ENCODE measurements at regions of chr10 and their contacts with region 1.

Region 1: DNA sequence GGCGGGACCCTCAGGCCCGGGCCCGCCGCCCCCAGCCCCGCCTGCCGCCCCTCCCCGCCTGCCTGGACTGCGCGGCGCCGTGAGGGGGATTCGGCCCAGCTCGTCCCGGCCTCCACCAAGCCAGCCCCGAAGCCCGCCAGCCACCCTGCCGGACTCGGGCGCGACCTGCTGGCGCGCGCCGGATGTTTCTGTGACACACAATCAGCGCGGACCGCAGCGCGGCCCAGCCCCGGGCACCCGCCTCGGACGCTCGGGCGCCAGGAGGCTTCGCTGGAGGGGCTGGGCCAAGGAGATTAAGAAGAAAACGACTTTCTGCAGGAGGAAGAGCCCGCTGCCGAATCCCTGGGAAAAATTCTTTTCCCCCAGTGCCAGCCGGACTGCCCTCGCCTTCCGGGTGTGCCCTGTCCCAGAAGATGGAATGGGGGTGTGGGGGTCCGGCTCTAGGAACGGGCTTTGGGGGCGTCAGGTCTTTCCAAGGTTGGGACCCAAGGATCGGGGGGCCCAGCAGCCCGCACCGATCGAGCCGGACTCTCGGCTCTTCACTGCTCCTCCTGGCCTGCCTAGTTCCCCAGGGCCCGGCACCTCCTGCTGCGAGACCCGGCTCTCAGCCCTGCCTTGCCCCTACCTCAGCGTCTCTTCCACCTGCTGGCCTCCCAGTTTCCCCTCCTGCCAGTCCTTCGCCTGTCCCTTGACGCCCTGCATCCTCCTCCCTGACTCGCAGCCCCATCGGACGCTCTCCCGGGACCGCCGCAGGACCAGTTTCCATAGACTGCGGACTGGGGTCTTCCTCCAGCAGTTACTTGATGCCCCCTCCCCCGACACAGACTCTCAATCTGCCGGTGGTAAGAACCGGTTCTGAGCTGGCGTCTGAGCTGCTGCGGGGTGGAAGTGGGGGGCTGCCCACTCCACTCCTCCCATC is 82.7 kb downstream of the PAX2 start:
- DNase-seq: peak; percentile 56
- ATAC-seq: peak; percentile 62
- H3K4me3 Mint-ChIP-seq: peak overlapping the region; percentile 70
- H3K27ac Mint-ChIP-seq: no peak overlapping the region
- H3K4me1 Mint-ChIP-seq: peaks cover 19% of the 10 kb centered on the region
- H3K27me3 Mint-ChIP-seq: peaks cover 76% of the 10 kb centered on the region
- CTCF ChIP-seq: no peak

Region 2: GRCh38 chr10:100535715-100536353 is 292.2 kb before region 1 on chr10 and contains the start of gene HIF1AN:
- CTCF ChIA-PET with region 1: no interaction called
- POLR2A ChIA-PET with region 1: no interaction called
- intact Hi-C with region 1: no loop called
- DNase-seq: peak; percentile 96
- ATAC-seq: peak; percentile 98
- H3K4me3 Mint-ChIP-seq: no peak within 1 kb of the TSS
- H3K27ac Mint-ChIP-seq: no peak within 1 kb of the TSS
- H3K4me1 Mint-ChIP-seq: peaks cover 22% of the 10 kb centered on the region
- H3K27me3 Mint-ChIP-seq: no peaks in the 10 kb centered on the region
- CTCF ChIP-seq: peak; percentile 76
- total RNA-seq, gene HIF1AN: 35.3 to 36.5 TPM

Region 3: GRCh38 chr10:100749309-100750217 is 78.5 kb before region 1 on chr10:
- CTCF ChIA-PET with region 1: interaction called, 7 read pairs
- POLR2A ChIA-PET with region 1: no interaction called
- intact Hi-C with region 1: loop called (anchors 5 kb)
- DNase-seq: no peak
- ATAC-seq: no peak
- H3K4me3 Mint-ChIP-seq: no peak overlapping the region
- H3K27ac Mint-ChIP-seq: no peak overlapping the region
- H3K4me1 Mint-ChIP-seq: peaks cover 26% of the 10 kb centered on the region
- H3K27me3 Mint-ChIP-seq: peaks cover 74% of the 10 kb centered on the region
- CTCF ChIP-seq: no peak

Region 4: DNA sequence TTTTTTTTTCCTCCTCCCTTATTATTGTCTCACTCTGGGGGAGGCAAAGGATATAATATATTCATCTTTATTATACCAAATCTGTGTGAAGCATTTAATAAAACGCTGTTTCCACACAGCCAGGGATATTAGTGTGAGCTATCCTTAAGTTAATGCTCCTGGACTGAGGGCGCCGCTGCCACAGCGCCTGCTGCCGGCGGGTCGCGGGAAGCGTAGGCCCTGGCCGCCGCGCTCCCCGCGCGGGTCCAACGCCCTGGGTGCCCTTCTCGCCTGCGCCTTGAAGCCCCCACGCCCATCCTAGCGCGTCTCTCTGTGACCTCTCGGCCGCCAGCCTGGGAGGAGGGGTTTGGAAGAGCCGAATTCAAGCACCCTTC is 410.6 kb after region 1 on chr10:
- CTCF ChIA-PET with region 1: no interaction called
- POLR2A ChIA-PET with region 1: no interaction called
- intact Hi-C with region 1: loop called (anchors 10 kb)
- DNase-seq: no peak
- ATAC-seq: peak; percentile 80
- H3K4me3 Mint-ChIP-seq: no peak overlapping the region
- H3K27ac Mint-ChIP-seq: no peak overlapping the region
- H3K4me1 Mint-ChIP-seq: peaks cover 16% of the 10 kb centered on the region
- H3K27me3 Mint-ChIP-seq: peaks cover 72% of the 10 kb centered on the region
- CTCF ChIP-seq: peak; percentile 70